Activated CD4-positive, alpha-beta T cell treated with anti-CD3 and anti-CD28 coated beads, Interleukin-2, amount 10 ng/mL, durations not matched to agents 24 days and 14 days (primary cell): ENCODE measurements at regions of chr18 and their contacts with region 1.

Region 1: GRCh38 chr18:59988098-59988706 is 88.4 kb downstream of the PMAIP1 start:
- DNase-seq: peak; percentile 75
- H3K4me3 Mint-ChIP-seq: no peak overlapping the region
- H3K27ac Mint-ChIP-seq: no peak overlapping the region
- H3K4me1 Mint-ChIP-seq: no peaks in the 10 kb centered on the region
- H3K27me3 Mint-ChIP-seq: peaks cover 25% of the 10 kb centered on the region

Region 2: DNA sequence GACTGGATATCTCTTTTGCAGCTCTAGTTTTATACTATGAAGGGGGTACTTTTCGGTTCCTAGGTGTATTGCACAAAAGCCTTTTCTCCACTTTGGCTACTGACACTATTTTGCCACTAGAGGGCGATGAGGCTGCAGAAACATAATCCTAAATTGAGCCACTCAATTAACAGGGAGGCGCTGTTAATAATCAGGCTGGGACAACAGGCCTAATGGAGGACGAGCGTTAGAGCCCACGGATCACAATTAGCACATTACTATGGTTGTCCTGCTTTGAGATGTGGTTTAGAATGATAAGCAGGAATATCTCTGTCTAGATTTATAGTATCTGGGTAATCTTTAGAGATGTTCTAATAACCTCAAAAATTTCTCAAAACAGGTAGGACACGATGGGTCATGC is 150.6 kb before region 1 on chr18:
- intact Hi-C with region 1: loop called (anchors 2 kb)
- DNase-seq: peak; percentile 84
- H3K4me3 Mint-ChIP-seq: no peak overlapping the region
- H3K27ac Mint-ChIP-seq: no peak overlapping the region
- H3K4me1 Mint-ChIP-seq: peaks cover 6% of the 10 kb centered on the region
- H3K27me3 Mint-ChIP-seq: peaks cover 16% of the 10 kb centered on the region

Region 3: DNA sequence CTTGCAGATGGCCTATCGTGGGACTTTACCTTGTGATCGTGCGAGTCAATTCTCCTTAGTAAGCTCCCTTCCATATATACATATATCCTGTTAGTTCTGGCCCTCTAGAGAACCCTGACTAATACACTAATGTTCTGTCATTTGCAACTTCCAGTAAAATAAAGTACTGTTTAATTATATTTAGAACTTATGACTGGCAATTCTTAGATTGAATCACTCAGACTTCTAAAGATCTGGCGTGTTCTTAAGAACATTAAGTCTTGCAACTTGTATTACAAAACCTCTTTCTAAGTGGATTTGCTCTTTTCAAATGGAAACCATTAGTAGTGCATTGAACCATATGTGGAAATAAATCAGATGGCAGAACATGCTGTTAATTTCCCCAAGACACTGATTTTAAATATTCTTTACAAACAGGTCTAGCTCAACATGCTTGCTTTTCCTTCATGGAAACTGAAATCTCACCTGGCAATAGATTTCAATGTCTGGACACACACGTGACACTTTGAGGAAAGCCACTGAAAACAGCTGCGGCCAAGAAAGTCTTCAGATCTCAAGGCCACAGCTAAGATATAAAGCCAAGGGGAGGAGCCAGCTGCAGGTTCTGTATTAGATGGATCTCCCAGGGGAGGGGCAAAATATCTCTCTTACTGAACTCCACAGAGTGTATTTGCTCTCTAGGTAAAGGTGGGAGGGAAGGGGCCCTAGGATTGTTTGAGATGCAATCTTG is 37.8 kb before region 1 on chr18:
- intact Hi-C with region 1: no loop called
- DNase-seq: no peak
- H3K4me3 Mint-ChIP-seq: no peak overlapping the region
- H3K27ac Mint-ChIP-seq: no peak overlapping the region
- H3K4me1 Mint-ChIP-seq: peaks cover 13% of the 10 kb centered on the region
- H3K27me3 Mint-ChIP-seq: peaks cover 6% of the 10 kb centered on the region

Region 4: DNA sequence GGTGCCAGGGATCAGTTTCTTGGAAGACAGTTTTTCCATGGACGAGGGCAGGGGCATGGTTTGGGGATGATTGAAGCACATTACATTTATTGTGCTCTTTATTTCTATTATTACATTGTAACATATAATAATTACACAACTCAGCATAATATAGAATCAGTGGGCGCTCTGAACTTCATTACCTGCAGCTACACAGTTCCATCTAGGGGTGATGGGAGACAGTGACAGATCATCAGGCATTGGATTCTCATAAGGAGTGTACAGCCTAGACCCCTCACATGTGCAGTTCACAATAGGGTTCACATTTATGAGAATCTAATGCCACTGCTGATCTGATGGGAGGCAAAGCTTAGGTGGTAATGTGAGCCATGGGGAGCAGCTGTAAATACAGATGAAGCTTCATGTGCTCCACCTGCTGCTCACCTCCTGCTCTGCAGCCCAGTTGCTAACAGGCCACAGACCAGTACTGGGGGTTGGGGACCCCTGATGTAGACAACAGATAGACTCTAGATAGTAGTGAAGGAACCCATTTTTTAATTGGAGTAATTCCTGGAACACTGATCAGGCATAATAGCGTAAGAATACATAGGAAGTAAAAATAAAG is 425.8 kb after region 1 on chr18:
- intact Hi-C with region 1: loop called (anchors 10 kb)
- DNase-seq: no peak
- H3K4me3 Mint-ChIP-seq: no peak overlapping the region
- H3K27ac Mint-ChIP-seq: no peak overlapping the region
- H3K4me1 Mint-ChIP-seq: no peaks in the 10 kb centered on the region
- H3K27me3 Mint-ChIP-seq: no peaks in the 10 kb centered on the region

Region 5: GRCh38 chr18:60549338-60549960 is 561.2 kb after region 1 on chr18:
- intact Hi-C with region 1: loop called (anchors 1 kb)
- DNase-seq: peak; percentile 70
- H3K4me3 Mint-ChIP-seq: no peak overlapping the region
- H3K27ac Mint-ChIP-seq: no peak overlapping the region
- H3K4me1 Mint-ChIP-seq: no peaks in the 10 kb centered on the region
- H3K27me3 Mint-ChIP-seq: no peaks in the 10 kb centered on the region

Region 6: GRCh38 chr18:61502472-61502871 is 1514.3 kb after region 1 on chr18:
- intact Hi-C with region 1: loop called (anchors 5 kb)
- DNase-seq: peak; percentile 58
- H3K4me3 Mint-ChIP-seq: no peak overlapping the region
- H3K27ac Mint-ChIP-seq: no peak overlapping the region
- H3K4me1 Mint-ChIP-seq: no peaks in the 10 kb centered on the region
- H3K27me3 Mint-ChIP-seq: peaks cover 2% of the 10 kb centered on the region